Heart left ventricle (tissue), 16 donors: ENCODE measurements at regions of chr10 and their contacts with region 1.

Region 1: DNA sequence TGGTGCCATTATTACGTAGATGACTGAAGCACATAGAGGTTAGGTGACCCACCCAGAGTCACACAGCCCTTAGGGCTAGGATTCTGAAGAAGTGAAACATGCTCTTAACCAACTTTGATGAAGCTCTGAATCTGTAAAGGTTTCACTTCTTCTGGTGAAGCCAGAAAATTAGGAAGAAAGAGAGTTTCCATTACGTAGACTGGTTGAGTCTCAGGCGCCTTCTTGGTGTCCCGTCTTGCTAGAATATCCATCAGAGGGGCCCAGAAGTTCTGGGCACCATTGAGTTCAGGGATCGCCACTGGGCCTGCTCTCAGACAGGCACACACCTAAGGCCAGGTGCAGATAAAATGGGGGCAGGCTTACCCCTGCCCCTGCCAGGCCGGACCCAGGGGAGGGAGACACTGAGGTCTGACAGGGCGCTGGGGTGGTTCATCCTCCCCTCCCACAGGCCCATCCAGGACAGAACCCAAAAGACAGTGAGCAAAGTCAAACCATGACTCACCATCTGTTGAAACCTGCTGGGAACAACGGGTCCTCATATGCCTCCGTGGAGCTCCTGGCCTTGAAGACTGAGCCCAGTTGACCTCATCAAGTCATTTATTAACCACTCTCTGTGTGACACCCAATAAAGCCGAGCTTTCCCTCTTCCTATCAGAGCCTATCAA is 33.2 kb downstream of the DRGX start:
- DNase-seq: no peak
- ATAC-seq: no peak
- H3K4me3 ChIP-seq: no peak overlapping the region
- H3K27ac ChIP-seq: no peak overlapping the region
- H3K4me1 ChIP-seq: peaks cover 0 to 29% (median 16%) of the 10 kb centered on the region in 12 donors
- H3K27me3 ChIP-seq: no peaks in the 10 kb centered on the region
- CTCF ChIP-seq: no peak
- POLR2A ChIP-seq: no peak

Region 2: DNA sequence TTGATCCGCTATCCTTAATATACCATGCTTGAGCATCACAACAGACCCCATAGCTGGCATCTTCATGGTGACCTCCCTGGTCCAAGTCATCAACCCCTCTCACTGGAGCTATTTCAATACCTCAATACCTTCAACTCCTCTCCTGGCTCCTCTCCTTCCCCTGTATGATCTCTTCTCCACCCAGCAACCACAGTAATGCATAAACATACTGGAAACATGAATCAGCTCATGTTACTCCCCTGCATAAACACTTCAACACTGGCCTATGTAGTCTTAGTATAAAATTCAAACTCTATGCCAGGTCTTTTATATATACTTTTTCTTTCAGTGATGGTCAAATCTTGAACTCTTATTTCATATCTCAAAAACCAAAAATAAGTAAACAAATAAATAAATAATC is 142.7 kb before region 1 on chr10:
- intact Hi-C with region 1: loop called in 1 of 10 experiments (anchors 10 kb)
- DNase-seq: no peak
- ATAC-seq: no peak
- H3K4me3 ChIP-seq: no peak overlapping the region
- H3K27ac ChIP-seq: no peak overlapping the region
- H3K4me1 ChIP-seq: peaks cover 0 to 9% (median 0%) of the 10 kb centered on the region in 12 donors
- H3K27me3 ChIP-seq: no peaks in the 10 kb centered on the region
- CTCF ChIP-seq: no peak
- POLR2A ChIP-seq: no peak

Region 3: GRCh38 chr10:49419005-49419404 is 56.3 kb after region 1 on chr10:
- intact Hi-C with region 1: loop called in 1 of 10 experiments (anchors 10 kb)
- DNase-seq: no peak
- ATAC-seq: no peak
- H3K4me3 ChIP-seq: no peak overlapping the region
- H3K27ac ChIP-seq: no peak overlapping the region
- H3K4me1 ChIP-seq: no peaks in the 10 kb centered on the region
- H3K27me3 ChIP-seq: no peaks in the 10 kb centered on the region
- CTCF ChIP-seq: no peak
- POLR2A ChIP-seq: no peak